ENCODE measurements at regions of chr7 and their contacts with region 1.

Region 1: GRCh38 chr7:106659963-106660861 is 746 bp downstream of the CCDC71L start:
- DNase-seq: peak; percentile 74 to 86
- H3K4me3 ChIP-seq: peak overlapping the region; percentile 66 to 97
- H3K27ac ChIP-seq: peak overlapping the region; percentile 93 to 99
- H3K4me1 ChIP-seq: peaks cover 0 to 37% (median 13%) of the 10 kb centered on the region in 4 donors
- H3K27me3 ChIP-seq: no peaks in the 10 kb centered on the region
- CTCF ChIP-seq: peak; percentile 58 to 72

Region 2: GRCh38 chr7:106190589-106191330 is 469.5 kb before region 1 on chr7:
- intact Hi-C with region 1: loop called (anchors 10 kb)
- DNase-seq: no peak
- H3K4me3 ChIP-seq: no peak overlapping the region
- H3K27ac ChIP-seq: no peak overlapping the region
- H3K4me1 ChIP-seq: peaks cover 0 to 7% (median 0%) of the 10 kb centered on the region in 4 donors
- H3K27me3 ChIP-seq: no peaks in the 10 kb centered on the region
- CTCF ChIP-seq: no peak

Region 3: GRCh38 chr7:106704000-106704840 is 44.0 kb after region 1 on chr7:
- intact Hi-C with region 1: no loop called
- DNase-seq: no peak
- H3K4me3 ChIP-seq: no peak overlapping the region
- H3K27ac ChIP-seq: no peak overlapping the region
- H3K4me1 ChIP-seq: no peaks in the 10 kb centered on the region
- H3K27me3 ChIP-seq: peaks cover 0 to 6% of the 10 kb centered on the region in 2 donors
- CTCF ChIP-seq: no peak